IMR-90 (cell line): ENCODE measurements at regions of chr5 and their contacts with region 1.

Region 1: GRCh38 chr5:160165137-160166068 is 46.2 kb upstream of the PWWP2A start:
- DNase-seq: peak; percentile 98
- ATAC-seq: peak; percentile 86
- H3K4me3 ChIP-seq: peak overlapping the region; percentile 2; the same call in 1 of the 2 replicates
- H3K27ac ChIP-seq: peak overlapping the region; percentile 97
- H3K4me1 ChIP-seq: peaks cover 20% of the 10 kb centered on the region
- H3K27me3 ChIP-seq: no peaks in the 10 kb centered on the region
- CTCF ChIP-seq: no peak
- POLR2A ChIP-seq: peak; percentile 82
- RAD21 ChIP-seq: peak; percentile 7; the same call in 1 of the 2 replicates

Region 2: DNA sequence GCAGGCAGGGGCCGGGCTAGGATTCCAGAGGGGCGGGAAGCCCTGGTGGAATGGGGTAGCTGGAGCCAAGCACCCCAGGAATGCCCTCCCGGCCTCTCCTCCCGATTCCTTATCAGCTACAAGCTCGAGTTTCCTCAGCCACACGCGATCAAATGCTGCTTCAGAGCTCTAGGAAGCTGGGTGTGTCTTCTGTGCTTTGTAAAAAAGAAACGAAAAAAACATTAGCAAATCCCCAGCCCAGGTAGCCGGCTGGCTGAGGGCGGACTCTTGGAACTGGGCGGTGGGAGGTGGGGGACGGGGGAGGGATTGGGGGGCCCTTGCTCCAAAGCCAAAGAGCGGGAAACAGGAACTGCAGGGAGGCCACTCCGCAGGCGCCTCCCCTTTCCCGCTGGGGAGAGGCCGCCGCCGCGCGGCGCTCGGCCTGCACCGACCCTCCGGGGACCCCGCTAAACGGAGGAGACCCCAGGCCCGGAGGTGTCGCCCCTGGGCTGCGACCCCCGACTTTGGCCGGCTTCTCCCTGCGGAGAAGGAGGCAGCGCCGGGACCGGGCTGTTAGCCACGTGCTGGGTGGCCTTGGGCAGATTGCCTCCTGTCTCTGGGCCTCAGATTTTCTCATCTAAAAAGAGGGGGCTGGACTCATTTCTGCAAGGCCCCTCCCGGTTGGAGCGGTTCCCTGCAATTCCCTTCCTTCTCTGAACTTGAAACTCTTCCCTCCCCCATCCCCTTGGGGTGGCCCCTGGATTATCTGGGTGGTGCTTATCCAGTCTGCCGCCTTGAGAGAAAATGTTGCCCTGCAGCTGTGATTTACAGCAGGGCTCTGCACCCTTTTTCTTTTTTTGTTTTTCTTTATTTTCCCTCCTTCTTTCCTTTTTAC is 23.0 kb after region 1 on chr5:
- CTCF ChIA-PET with region 1: no interaction called
- POLR2A ChIA-PET with region 1: interaction called, 3 read pairs
- dilution Hi-C with region 1: no loop called
- in situ Hi-C with region 1: no loop called
- intact Hi-C with region 1: loop called (anchors 2 kb)
- DNase-seq: peak; percentile 82
- ATAC-seq: peak; percentile 83
- H3K4me3 ChIP-seq: peak overlapping the region; percentile 22; the same call in 1 of the 2 replicates
- H3K27ac ChIP-seq: peak overlapping the region; percentile 68
- H3K4me1 ChIP-seq: peaks cover 3% of the 10 kb centered on the region
- H3K27me3 ChIP-seq: no peaks in the 10 kb centered on the region
- CTCF ChIP-seq: 0 out of 2 replicates have a peak, but pooled peaks have one; percentile 10
- POLR2A ChIP-seq: no peak
- RAD21 ChIP-seq: no peak